Breast epithelium (tissue), 4 donors: ENCODE measurements at regions of chr9 and their contacts with region 1.

Region 1: DNA sequence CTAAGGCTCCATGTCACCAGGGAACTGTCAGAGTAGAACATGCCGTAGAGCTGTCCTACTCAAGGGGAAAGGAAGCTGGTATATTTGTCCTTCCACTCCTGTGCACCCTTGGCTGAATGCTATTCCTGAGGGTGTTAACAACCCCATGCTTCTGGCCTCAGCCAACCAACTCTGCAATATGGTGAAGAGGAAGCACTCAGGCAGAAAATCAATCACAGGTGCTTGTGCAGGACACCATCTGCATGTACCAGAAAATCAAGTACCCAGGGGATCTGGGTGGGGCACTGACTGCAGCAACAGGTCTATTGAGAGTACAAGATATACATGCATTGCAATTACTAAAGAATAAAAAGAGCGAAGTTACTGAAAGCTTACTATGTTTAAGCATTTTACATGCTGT is 51.4 kb upstream of the NEK6 start:
- DNase-seq: no peak
- H3K4me3 ChIP-seq: no peak overlapping the region
- H3K27ac ChIP-seq: no peak overlapping the region
- H3K4me1 ChIP-seq: no peaks in the 10 kb centered on the region
- H3K27me3 ChIP-seq: no peaks in the 10 kb centered on the region
- CTCF ChIP-seq: no peak
- POLR2A ChIP-seq: no peak

Region 2: DNA sequence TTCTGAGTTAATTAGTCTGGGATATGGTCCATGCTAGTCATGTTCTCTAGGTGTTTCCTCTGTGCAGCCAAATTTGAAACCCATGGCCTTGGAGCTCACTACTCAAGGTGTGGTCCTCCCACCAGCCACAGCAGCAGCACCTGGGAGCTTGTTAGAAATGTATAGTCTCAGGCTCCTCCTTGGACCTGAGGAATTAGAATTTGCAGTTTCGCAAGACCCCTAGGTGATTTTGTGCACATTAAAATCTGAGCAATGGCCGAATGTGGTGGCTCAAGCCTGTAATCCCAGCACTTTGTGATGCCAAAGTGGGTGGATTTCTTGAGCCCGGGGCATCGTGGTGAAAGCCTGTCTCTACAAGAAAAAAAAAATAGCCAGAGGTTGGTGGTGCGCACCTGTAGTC is 21.0 kb before region 1 on chr9:
- intact Hi-C with region 1: loop called (anchors 1 kb)
- DNase-seq: no peak
- H3K4me3 ChIP-seq: no peak overlapping the region
- H3K27ac ChIP-seq: no peak overlapping the region
- H3K4me1 ChIP-seq: no peaks in the 10 kb centered on the region
- H3K27me3 ChIP-seq: peaks cover 0 to 25% of the 10 kb centered on the region in 2 donors
- CTCF ChIP-seq: no peak
- POLR2A ChIP-seq: no peak